Common myeloid progenitor, CD34-positive (primary cell): ENCODE measurements at regions of chr5 and their contacts with region 1.

Region 1: GRCh38 chr5:10261065-10261464 is 11.0 kb downstream of the CCT5 start:
- DNase-seq: no peak
- H3K4me3 ChIP-seq: no peak overlapping the region
- H3K27ac ChIP-seq: no peak overlapping the region
- H3K4me1 ChIP-seq: no peaks in the 10 kb centered on the region
- H3K27me3 ChIP-seq: no peaks in the 10 kb centered on the region

Region 2: DNA sequence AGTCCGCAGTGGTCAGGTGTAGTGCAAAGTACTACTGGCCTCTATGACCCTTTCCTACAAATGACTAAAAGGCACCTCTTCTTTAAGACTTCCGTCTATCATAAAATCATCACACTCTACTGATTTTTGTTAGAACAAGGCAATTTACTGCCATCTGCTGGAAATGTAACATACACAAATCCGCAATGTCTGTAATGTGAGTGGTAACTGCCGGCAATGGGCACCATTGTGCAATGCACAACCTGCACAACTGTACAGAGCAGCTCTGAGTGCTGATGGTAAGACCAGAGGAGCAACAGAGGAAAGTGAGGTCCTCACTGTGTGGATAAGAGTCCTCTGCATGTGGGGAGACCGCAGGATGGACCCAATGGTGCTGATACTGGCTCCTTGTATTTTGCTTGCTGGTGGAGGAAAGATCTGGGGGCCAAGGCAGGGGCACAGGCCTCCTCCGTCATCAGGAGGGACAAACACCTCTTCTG is 115.1 kb before region 1 on chr5:
- CTCF ChIA-PET with region 1: no interaction called
- POLR2A ChIA-PET with region 1: no interaction called
- DNase-seq: no peak
- H3K4me3 ChIP-seq: no peak overlapping the region
- H3K27ac ChIP-seq: no peak overlapping the region
- H3K4me1 ChIP-seq: no peaks in the 10 kb centered on the region
- H3K27me3 ChIP-seq: peaks cover 0 to 2% (median 0%) of the 10 kb centered on the region in 5 experiments

Region 3: GRCh38 chr5:10235350-10235749 is 25.7 kb before region 1 on chr5:
- CTCF ChIA-PET with region 1: no interaction called
- POLR2A ChIA-PET with region 1: no interaction called
- DNase-seq: no peak
- H3K4me3 ChIP-seq: no peak overlapping the region
- H3K27ac ChIP-seq: no peak overlapping the region
- H3K4me1 ChIP-seq: no peaks in the 10 kb centered on the region
- H3K27me3 ChIP-seq: no peaks in the 10 kb centered on the region

Region 4: DNA sequence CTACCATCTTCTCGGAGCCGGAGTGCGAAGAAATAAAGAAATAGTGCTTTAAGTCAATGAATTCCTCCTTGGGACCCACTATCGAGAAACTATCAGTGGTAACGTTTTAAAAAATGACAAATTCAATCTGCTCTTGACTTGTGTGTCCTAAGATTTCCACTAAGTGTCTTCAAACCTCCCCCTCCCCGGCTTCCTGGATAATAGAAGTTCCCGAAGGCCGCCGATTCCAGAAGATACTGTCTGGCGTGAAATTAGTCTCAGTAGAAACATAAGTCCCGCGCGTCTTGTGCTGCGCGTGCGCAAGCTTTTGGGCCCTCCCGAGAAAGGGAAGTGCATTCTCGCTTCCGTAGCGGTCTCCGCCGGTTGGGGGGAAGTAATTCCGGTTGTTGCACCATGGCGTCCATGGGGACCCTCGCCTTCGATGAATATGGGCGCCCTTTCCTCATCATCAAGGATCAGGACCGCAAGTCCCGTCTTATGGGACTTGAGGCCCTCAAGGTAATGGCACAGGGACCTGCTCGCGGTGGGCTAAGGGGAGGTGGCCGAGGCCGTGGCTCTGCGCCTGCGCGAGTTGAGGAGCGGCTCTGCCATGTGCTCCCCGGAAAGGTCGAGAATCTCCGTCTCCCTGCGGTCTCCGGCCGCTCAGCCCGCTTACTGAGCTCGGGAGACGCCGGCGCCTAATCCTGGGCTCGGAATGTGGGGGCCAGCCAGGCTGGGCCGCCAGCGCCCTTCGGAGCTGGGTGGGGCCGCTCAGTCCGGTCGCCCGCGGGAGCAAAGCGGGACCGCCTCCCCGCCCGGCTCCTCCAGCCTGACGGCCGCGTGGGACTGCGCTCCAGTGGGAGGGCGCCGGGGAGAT is 10.9 kb before region 1 on chr5 and contains the start of gene CCT5:
- CTCF ChIA-PET with region 1: interaction called, 10 read pairs
- POLR2A ChIA-PET with region 1: interaction called, 4 read pairs
- DNase-seq: peak; percentile 99
- H3K4me3 ChIP-seq: peak within 1 kb of the TSS; percentile 87 to 99 (median 96)
- H3K27ac ChIP-seq: peak within 1 kb of the TSS; percentile 100
- H3K4me1 ChIP-seq: peaks cover 14 to 31% (median 22%) of the 10 kb centered on the region in 4 experiments
- H3K27me3 ChIP-seq: no peaks in the 10 kb centered on the region